IMR-90 (cell line): ENCODE measurements at regions of chr13 and their contacts with region 1.

Region 1: GRCh38 chr13:36999054-36999714 is at the start of gene ALG5:
- DNase-seq: peak; percentile 84
- ATAC-seq: peak; percentile 83
- H3K4me3 ChIP-seq: peak within 1 kb of the TSS; percentile 71
- H3K27ac ChIP-seq: peak within 1 kb of the TSS; percentile 100
- H3K4me1 ChIP-seq: no peaks in the 10 kb centered on the region; the same call in 1 of the 2 replicates
- H3K27me3 ChIP-seq: no peaks in the 10 kb centered on the region
- CTCF ChIP-seq: peak; percentile 98
- POLR2A ChIP-seq: peak; percentile 78
- RAD21 ChIP-seq: peak; percentile 42
- total RNA-seq, gene ALG5: 19.4 and 29.4 TPM in 2 replicates

Region 2: GRCh38 chr13:35978603-35979316 is 1020.4 kb before region 1 on chr13:
- CTCF ChIA-PET with region 1: no interaction called
- POLR2A ChIA-PET with region 1: no interaction called
- dilution Hi-C with region 1: no loop called
- in situ Hi-C with region 1: no loop called
- intact Hi-C with region 1: loop called (anchors 10 kb)
- DNase-seq: peak; percentile 69
- ATAC-seq: peak; percentile 68
- H3K4me3 ChIP-seq: no peak overlapping the region
- H3K27ac ChIP-seq: no peak overlapping the region
- H3K4me1 ChIP-seq: no peaks in the 10 kb centered on the region; the same call in 1 of the 2 replicates
- H3K27me3 ChIP-seq: peaks cover 4% of the 10 kb centered on the region; the same call in 1 of the 2 replicates
- CTCF ChIP-seq: peak; percentile 86
- POLR2A ChIP-seq: no peak
- RAD21 ChIP-seq: peak; percentile 87

Region 3: GRCh38 chr13:36420437-36420891 is 578.7 kb before region 1 on chr13:
- CTCF ChIA-PET with region 1: no interaction called
- POLR2A ChIA-PET with region 1: no interaction called
- dilution Hi-C with region 1: no loop called
- in situ Hi-C with region 1: loop called (anchors 10 kb)
- intact Hi-C with region 1: no loop called
- DNase-seq: peak; percentile 59
- ATAC-seq: peak; percentile 94
- H3K4me3 ChIP-seq: no peak overlapping the region
- H3K27ac ChIP-seq: no peak overlapping the region
- H3K4me1 ChIP-seq: no peaks in the 10 kb centered on the region
- H3K27me3 ChIP-seq: no peaks in the 10 kb centered on the region
- CTCF ChIP-seq: peak; percentile 79
- POLR2A ChIP-seq: no peak
- RAD21 ChIP-seq: peak; percentile 75

Region 4: GRCh38 chr13:36806102-36806501 is 193.1 kb before region 1 on chr13:
- CTCF ChIA-PET with region 1: no interaction called
- POLR2A ChIA-PET with region 1: no interaction called
- dilution Hi-C with region 1: no loop called
- in situ Hi-C with region 1: no loop called
- intact Hi-C with region 1: no loop called
- DNase-seq: no peak
- ATAC-seq: no peak
- H3K4me3 ChIP-seq: no peak overlapping the region
- H3K27ac ChIP-seq: no peak overlapping the region
- H3K4me1 ChIP-seq: no peaks in the 10 kb centered on the region; the same call in 1 of the 2 replicates
- H3K27me3 ChIP-seq: peaks cover 4% of the 10 kb centered on the region
- CTCF ChIP-seq: no peak
- POLR2A ChIP-seq: no peak
- RAD21 ChIP-seq: no peak

Region 5: DNA sequence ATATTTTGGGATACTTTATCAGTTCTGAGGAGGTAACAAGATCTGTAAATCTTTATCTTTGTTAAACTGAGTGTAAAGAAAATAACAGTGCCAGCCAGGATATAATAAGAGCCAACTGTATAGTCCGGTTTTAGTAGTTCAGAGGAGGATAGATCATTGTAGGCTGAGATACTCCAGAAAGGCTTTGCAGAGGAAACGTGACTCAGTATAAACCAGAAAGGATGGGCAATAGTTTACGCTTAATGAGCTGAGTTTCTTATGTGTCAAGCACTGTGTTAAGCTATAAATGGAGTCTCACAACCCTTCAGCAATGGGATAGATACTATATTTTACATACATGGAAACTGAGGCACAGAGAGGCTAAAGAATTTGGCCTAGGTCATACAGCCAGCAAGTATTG is 176.4 kb before region 1 on chr13:
- CTCF ChIA-PET with region 1: no interaction called
- POLR2A ChIA-PET with region 1: no interaction called
- dilution Hi-C with region 1: no loop called
- in situ Hi-C with region 1: no loop called
- intact Hi-C with region 1: no loop called
- DNase-seq: peak; percentile 15
- ATAC-seq: no peak
- H3K4me3 ChIP-seq: no peak overlapping the region
- H3K27ac ChIP-seq: no peak overlapping the region
- H3K4me1 ChIP-seq: no peaks in the 10 kb centered on the region
- H3K27me3 ChIP-seq: no peaks in the 10 kb centered on the region
- CTCF ChIP-seq: no peak
- POLR2A ChIP-seq: no peak
- RAD21 ChIP-seq: no peak

Region 6: GRCh38 chr13:36858290-36858689 is 140.9 kb before region 1 on chr13:
- CTCF ChIA-PET with region 1: no interaction called
- POLR2A ChIA-PET with region 1: no interaction called
- dilution Hi-C with region 1: loop called (anchors 25 kb)
- in situ Hi-C with region 1: no loop called
- intact Hi-C with region 1: no loop called
- DNase-seq: peak; percentile 65
- ATAC-seq: peak; percentile 94
- H3K4me3 ChIP-seq: no peak overlapping the region
- H3K27ac ChIP-seq: no peak overlapping the region
- H3K4me1 ChIP-seq: no peaks in the 10 kb centered on the region; the same call in 1 of the 2 replicates
- H3K27me3 ChIP-seq: no peaks in the 10 kb centered on the region
- CTCF ChIP-seq: peak; percentile 61
- POLR2A ChIP-seq: no peak
- RAD21 ChIP-seq: peak; percentile 70

Region 7: DNA sequence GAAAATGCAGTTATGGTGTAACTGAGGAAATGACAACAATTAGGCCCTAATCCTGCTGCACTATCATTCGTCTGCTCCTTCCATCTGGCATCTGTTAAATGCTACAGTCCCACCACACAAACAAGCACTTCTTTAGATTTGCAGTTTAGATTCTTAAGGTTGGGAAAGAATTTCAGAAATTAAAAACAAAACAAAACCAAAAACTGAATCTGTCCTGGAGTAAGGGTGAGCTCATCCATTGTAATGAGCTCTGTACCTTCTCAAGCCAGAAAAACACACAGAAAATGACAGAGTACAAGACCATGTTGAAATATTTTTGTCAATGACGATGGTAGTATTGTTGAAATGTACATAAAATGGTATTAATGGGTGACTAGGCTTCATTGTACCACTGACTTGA is 107.4 kb before region 1 on chr13:
- CTCF ChIA-PET with region 1: no interaction called
- POLR2A ChIA-PET with region 1: no interaction called
- dilution Hi-C with region 1: no loop called
- in situ Hi-C with region 1: no loop called
- intact Hi-C with region 1: no loop called
- DNase-seq: peak; percentile 22
- ATAC-seq: peak; percentile 74
- H3K4me3 ChIP-seq: no peak overlapping the region
- H3K27ac ChIP-seq: peak overlapping the region; percentile 42; the same call in 1 of the 2 replicates
- H3K4me1 ChIP-seq: peaks cover 9% of the 10 kb centered on the region
- H3K27me3 ChIP-seq: no peaks in the 10 kb centered on the region
- CTCF ChIP-seq: no peak
- POLR2A ChIP-seq: no peak
- RAD21 ChIP-seq: no peak

Region 8: GRCh38 chr13:36945078-36945477 is 54.1 kb before region 1 on chr13:
- CTCF ChIA-PET with region 1: no interaction called
- POLR2A ChIA-PET with region 1: no interaction called
- dilution Hi-C with region 1: no loop called
- in situ Hi-C with region 1: no loop called
- intact Hi-C with region 1: no loop called
- DNase-seq: no peak
- ATAC-seq: no peak
- H3K4me3 ChIP-seq: no peak overlapping the region
- H3K27ac ChIP-seq: no peak overlapping the region
- H3K4me1 ChIP-seq: no peaks in the 10 kb centered on the region
- H3K27me3 ChIP-seq: no peaks in the 10 kb centered on the region
- CTCF ChIP-seq: no peak
- POLR2A ChIP-seq: no peak
- RAD21 ChIP-seq: no peak

Region 9: GRCh38 chr13:37068962-37069361 is 69.8 kb after region 1 on chr13:
- CTCF ChIA-PET with region 1: no interaction called
- POLR2A ChIA-PET with region 1: no interaction called
- dilution Hi-C with region 1: no loop called
- in situ Hi-C with region 1: no loop called
- intact Hi-C with region 1: loop called (anchors 1 kb)
- DNase-seq: peak; percentile 30
- ATAC-seq: peak; percentile 81
- H3K4me3 ChIP-seq: no peak overlapping the region
- H3K27ac ChIP-seq: no peak overlapping the region
- H3K4me1 ChIP-seq: 0 out of 2 replicates have a peak, but pooled peaks cover 3% of the 10 kb centered on the region
- H3K27me3 ChIP-seq: no peaks in the 10 kb centered on the region
- CTCF ChIP-seq: peak; percentile 46
- POLR2A ChIP-seq: no peak
- RAD21 ChIP-seq: peak; percentile 51